Posterior vena cava (tissue), 2 donors: ENCODE measurements at regions of chr5 and their contacts with region 1.

Region 1: DNA sequence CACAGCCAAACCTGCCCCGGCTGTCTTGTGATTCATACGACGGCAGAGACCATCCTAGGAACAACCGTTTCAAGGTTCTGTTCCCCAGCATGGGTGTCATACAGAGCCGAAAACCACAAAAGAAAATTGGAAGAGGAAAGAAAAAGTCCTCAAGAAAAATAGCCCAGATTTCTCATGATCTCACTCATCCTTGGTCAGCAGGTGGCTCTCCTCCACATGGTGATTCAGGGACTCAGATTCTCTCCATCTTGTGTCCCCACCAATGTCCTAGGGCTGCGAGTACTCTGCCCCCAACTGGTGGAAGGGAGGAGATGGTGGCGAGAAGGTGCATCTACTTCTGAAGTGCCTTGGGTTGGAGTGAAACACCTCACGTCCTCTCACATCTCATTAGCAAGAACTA is 25.6 kb downstream of the PDZD2 start:
- DNase-seq: no peak

Region 2: GRCh38 chr5:31717561-31717960 is 53.0 kb after region 1 on chr5:
- intact Hi-C with region 1: loop called in 1 of 2 experiments (anchors 1 kb)
- DNase-seq: no peak

Region 3: GRCh38 chr5:32100230-32100629 is 435.7 kb after region 1 on chr5:
- intact Hi-C with region 1: no loop called
- DNase-seq: no peak